ENCODE measurements at regions of chrX and their contacts with region 1.

Region 1: GRCh38 chrX:12701628-12702027 is 89.6 kb upstream of the PRPS2 start:
- DNase-seq: peak; percentile 58
- ATAC-seq: peak; percentile 42
- H3K4me3 Mint-ChIP-seq: no peak overlapping the region
- H3K27ac Mint-ChIP-seq: no peak overlapping the region
- H3K4me1 Mint-ChIP-seq: no peaks in the 10 kb centered on the region
- H3K27me3 Mint-ChIP-seq: peaks cover 3% of the 10 kb centered on the region
- CTCF ChIP-seq: peak; percentile 41

Region 2: DNA sequence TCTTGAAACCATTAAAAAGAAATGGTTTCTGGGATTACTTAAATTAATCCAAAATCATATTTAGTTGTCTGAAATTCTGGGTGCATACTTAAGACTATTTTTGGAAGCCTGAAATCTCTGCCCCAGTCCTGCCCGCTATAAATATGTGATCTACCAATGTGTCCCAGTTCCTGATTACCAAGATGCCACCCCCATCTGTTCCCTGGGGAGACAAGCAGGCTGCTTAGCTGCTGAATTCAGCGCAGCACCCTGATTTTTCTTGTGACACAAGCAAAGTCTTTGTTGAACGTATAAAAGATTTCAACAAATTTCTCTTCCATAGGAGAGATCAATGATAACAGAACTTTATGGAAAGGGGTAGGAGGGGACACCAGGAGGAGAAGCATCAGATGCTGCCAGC is 11.0 kb before region 1 on chrX:
- CTCF ChIA-PET with region 1: interaction called, 11 read pairs
- POLR2A ChIA-PET with region 1: no interaction called
- intact Hi-C with region 1: no loop called
- DNase-seq: no peak
- ATAC-seq: no peak
- H3K4me3 Mint-ChIP-seq: no peak overlapping the region
- H3K27ac Mint-ChIP-seq: no peak overlapping the region
- H3K4me1 Mint-ChIP-seq: no peaks in the 10 kb centered on the region
- H3K27me3 Mint-ChIP-seq: peaks cover 2% of the 10 kb centered on the region
- CTCF ChIP-seq: no peak

Region 3: GRCh38 chrX:12894074-12895030 is 192.7 kb after region 1 on chrX:
- CTCF ChIA-PET with region 1: interaction called, 5 read pairs
- POLR2A ChIA-PET with region 1: no interaction called
- intact Hi-C with region 1: loop called (anchors 10 kb)
- DNase-seq: peak; percentile 67
- ATAC-seq: peak; percentile 52
- H3K4me3 Mint-ChIP-seq: no peak overlapping the region
- H3K27ac Mint-ChIP-seq: no peak overlapping the region
- H3K4me1 Mint-ChIP-seq: peaks cover 40% of the 10 kb centered on the region
- H3K27me3 Mint-ChIP-seq: no peaks in the 10 kb centered on the region
- CTCF ChIP-seq: peak; percentile 72